ENCODE measurements at regions of chr18 and their contacts with region 1.

Region 1: DNA sequence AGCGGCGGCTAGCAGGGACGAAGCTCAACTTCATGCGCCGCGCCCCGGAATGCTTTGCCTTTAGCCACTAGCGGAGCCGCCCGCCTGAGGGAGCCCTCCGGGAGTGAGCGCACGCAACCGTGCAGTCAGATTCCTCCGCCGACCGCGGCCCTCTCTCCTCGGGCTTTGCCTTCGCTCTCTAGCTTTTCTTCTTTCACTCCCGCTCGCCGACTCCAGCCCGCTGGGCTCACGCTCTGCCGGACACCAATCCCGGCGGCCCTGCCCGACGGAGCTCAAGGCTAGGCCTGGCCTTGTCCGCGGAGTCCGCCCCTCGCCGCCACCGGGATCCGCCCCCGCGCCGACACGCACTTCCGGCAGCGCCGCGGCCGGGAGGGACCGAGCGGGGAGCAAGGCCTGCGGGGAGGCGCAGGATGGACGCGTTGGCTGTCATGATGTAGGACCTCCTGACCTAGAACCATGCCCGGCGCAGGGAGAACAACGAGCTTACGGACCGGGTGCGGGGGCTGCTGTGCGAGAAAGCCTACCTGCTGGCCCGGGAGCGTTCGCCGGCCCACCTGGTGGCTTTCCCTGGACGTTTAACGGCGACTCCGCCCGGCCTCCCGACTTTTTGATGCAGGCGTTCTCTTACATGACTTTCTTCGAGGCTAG is 40.8 kb upstream of the AKAIN1 start:
- DNase-seq: peak; percentile 77 to 96 (median 92)

Region 2: DNA sequence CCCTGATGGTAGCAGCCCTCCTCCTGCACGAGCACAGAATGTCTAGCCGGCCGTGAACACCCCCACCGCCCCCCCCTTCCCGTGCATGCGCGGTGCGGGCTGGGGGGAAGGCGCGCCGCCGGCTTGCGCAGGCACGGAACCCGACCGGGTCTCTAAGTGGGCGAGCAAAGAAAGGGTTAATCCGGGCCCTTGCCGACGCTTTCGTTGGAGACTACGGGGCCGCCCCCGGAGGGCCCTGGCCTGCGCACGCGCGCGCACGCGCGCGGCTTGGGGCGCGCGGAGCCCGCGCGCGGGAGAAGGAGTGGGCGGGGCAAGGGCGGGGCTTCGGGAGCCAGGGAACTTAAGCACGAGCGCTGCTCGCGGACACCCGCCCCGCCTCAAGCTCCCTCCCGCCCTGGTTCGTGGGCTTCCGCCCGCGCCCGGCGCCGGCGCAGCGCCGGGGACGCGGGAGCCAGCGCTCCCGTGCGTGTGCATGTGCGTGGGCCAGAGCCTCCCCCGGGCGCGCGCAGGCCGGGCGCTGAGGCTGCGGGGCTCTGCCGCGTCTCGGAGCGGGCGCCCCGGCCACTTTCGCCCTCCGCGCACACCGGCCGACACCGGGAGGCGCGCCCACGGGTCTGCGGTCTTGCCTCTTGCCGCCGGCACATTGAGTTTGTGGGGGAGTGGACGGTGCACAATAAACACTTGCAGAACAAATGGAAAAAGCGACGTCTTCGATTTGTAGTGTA is 58.3 kb after region 1 on chr18:
- intact Hi-C with region 1: loop called (anchors 2 kb)
- DNase-seq: peak; percentile 81 to 97 (median 92)

Region 3: GRCh38 chr18:5417342-5417741 is 179.5 kb after region 1 on chr18:
- intact Hi-C with region 1: loop called (anchors 5 kb)
- DNase-seq: peak in 40 of 42 donors; percentile 20 to 82 (median 60)

Measured in head of caudate nucleus (tissue), 42 donors.